HCT116 (cell line): ENCODE measurements at regions of chr7 and their contacts with region 1.

Region 1: GRCh38 chr7:31134246-31135188 is 82.4 kb downstream of the ADCYAP1R1 start:
- DNase-seq: peak; percentile 59
- ATAC-seq: peak; percentile 100
- H3K4me3 ChIP-seq: no peak overlapping the region
- H3K27ac ChIP-seq: no peak overlapping the region
- H3K4me1 ChIP-seq: no peaks in the 10 kb centered on the region
- H3K27me3 ChIP-seq: no peaks in the 10 kb centered on the region
- CTCF ChIP-seq: peak; percentile 62 to 82 (median 67)
- POLR2A ChIP-seq: no peak
- RAD21 ChIP-seq: peak; percentile 78

Region 2: DNA sequence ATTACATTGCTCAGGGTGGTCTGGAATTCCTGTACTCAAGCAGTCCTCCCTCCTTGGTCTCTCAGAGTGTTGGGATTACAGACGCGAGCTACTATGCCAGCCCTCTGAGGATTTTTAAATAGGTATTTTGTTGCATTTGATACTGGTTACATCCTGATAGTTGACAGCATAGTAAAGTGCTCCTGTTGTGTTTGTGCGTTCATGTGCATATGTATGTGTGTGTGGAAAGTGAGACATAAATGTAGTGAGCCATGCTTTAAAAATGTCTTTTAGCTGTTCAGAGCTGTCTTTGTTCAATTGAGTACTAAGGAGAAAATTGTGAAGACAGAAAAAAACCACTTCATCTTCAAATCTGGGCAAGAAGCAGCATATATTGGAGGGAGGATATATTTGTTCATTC is 822.3 kb before region 1 on chr7:
- CTCF ChIA-PET with region 1: no interaction called
- POLR2A ChIA-PET with region 1: no interaction called
- RAD21 ChIA-PET with region 1: no interaction called
- intact Hi-C with region 1: no loop called
- DNase-seq: no peak
- ATAC-seq: no peak
- H3K4me3 ChIP-seq: no peak overlapping the region
- H3K27ac ChIP-seq: no peak overlapping the region
- H3K4me1 ChIP-seq: peaks cover 0 to 6% of the 10 kb centered on the region in 2 experiments; a peak in 2 of 4 replicates
- H3K27me3 ChIP-seq: no peaks in the 10 kb centered on the region
- CTCF ChIP-seq: no peak
- POLR2A ChIP-seq: no peak
- RAD21 ChIP-seq: no peak

Region 3: GRCh38 chr7:30845426-30846135 is 288.9 kb before region 1 on chr7:
- CTCF ChIA-PET with region 1: no interaction called
- POLR2A ChIA-PET with region 1: no interaction called
- RAD21 ChIA-PET with region 1: no interaction called
- intact Hi-C with region 1: no loop called
- DNase-seq: no peak
- ATAC-seq: no peak
- H3K4me3 ChIP-seq: no peak overlapping the region
- H3K27ac ChIP-seq: peak overlapping the region; percentile 32; the same call in 1 of the 2 replicates
- H3K4me1 ChIP-seq: peaks cover 18 to 20% of the 10 kb centered on the region in 2 experiments
- H3K27me3 ChIP-seq: no peaks in the 10 kb centered on the region
- CTCF ChIP-seq: no peak
- POLR2A ChIP-seq: no peak
- RAD21 ChIP-seq: no peak

Region 4: GRCh38 chr7:30983042-30983913 is 151.2 kb before region 1 on chr7:
- CTCF ChIA-PET with region 1: interaction called, 482 read pairs
- POLR2A ChIA-PET with region 1: no interaction called
- RAD21 ChIA-PET with region 1: interaction called in 1 of 2 experiments, 4 read pairs
- intact Hi-C with region 1: no loop called
- DNase-seq: peak; percentile 70
- ATAC-seq: peak; percentile 98
- H3K4me3 ChIP-seq: no peak overlapping the region
- H3K27ac ChIP-seq: no peak overlapping the region
- H3K4me1 ChIP-seq: peaks cover 7 to 10% of the 10 kb centered on the region in 2 experiments; a peak in 3 of 4 replicates
- H3K27me3 ChIP-seq: peaks cover 14% of the 10 kb centered on the region
- CTCF ChIP-seq: peak; percentile 82 to 95 (median 90)
- POLR2A ChIP-seq: no peak
- RAD21 ChIP-seq: peak; percentile 94

Region 5: GRCh38 chr7:31151849-31152248 is 17.3 kb after region 1 on chr7:
- CTCF ChIA-PET with region 1: no interaction called
- POLR2A ChIA-PET with region 1: no interaction called
- RAD21 ChIA-PET with region 1: no interaction called
- intact Hi-C with region 1: no loop called
- DNase-seq: no peak
- ATAC-seq: no peak
- H3K4me3 ChIP-seq: no peak overlapping the region
- H3K27ac ChIP-seq: no peak overlapping the region
- H3K4me1 ChIP-seq: no peaks in the 10 kb centered on the region
- H3K27me3 ChIP-seq: peaks cover 3% of the 10 kb centered on the region; the same call in 1 of the 2 replicates
- CTCF ChIP-seq: no peak
- POLR2A ChIP-seq: no peak
- RAD21 ChIP-seq: no peak

Region 6: DNA sequence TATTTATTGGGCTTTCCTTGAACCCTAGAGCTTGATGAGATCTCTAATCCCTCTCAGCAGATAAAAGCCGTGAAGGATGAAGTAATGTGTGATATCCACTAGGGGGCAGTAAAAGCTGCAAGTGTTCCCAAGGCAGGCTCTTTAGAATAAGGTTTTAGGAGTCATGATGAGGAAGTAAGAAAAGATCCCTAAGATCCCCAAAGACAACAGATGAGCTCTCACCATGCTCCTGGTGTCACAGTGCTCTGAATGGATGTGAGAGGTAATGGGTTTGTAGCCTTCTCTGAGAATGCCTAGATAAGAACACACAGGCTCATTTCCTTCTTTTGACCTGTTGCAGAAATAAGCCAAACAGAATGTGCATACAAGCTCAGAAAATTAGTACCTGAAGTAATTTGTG is 308.9 kb after region 1 on chr7:
- CTCF ChIA-PET with region 1: interaction called, 12 read pairs
- POLR2A ChIA-PET with region 1: no interaction called
- RAD21 ChIA-PET with region 1: no interaction called
- intact Hi-C with region 1: no loop called
- DNase-seq: peak; percentile 32
- ATAC-seq: peak; percentile 87
- H3K4me3 ChIP-seq: no peak overlapping the region
- H3K27ac ChIP-seq: no peak overlapping the region
- H3K4me1 ChIP-seq: no peaks in the 10 kb centered on the region
- H3K27me3 ChIP-seq: peaks cover 28% of the 10 kb centered on the region; the same call in 1 of the 2 replicates
- CTCF ChIP-seq: peak; percentile 70 to 84 (median 71)
- POLR2A ChIP-seq: no peak
- RAD21 ChIP-seq: peak; percentile 76

Region 7: DNA sequence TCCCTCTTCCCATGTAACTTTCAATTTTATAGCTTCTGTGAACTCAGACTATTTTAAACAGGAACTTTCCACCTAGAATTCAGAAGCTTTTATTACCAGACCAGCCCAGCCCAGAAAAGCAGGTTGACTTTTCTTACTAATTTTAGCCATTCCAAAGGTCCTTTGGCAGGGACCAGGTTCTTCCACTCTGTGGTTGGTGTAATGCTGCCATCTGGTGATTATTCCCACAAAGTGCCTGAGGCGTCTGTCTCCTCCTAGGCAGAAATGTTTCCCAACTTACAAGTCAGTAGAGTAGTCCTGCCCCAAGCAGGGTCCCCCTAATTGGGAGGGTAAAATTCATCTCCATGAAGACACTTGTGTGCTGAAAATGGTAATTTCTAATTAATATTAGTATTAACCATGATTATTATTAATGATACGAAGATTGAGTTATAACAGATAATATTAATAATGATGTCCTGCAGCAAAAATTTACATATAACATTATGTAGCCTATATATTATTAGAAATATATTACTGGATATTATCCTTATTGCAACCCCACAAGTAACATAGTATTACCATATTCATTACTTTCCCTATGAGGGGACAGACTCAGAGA is 499.5 kb after region 1 on chr7:
- CTCF ChIA-PET with region 1: interaction called, 25 read pairs
- POLR2A ChIA-PET with region 1: no interaction called
- RAD21 ChIA-PET with region 1: no interaction called
- intact Hi-C with region 1: loop called (anchors 1 kb)
- DNase-seq: peak; percentile 34
- ATAC-seq: peak; percentile 83
- H3K4me3 ChIP-seq: no peak overlapping the region
- H3K27ac ChIP-seq: no peak overlapping the region
- H3K4me1 ChIP-seq: no peaks in the 10 kb centered on the region
- H3K27me3 ChIP-seq: no peaks in the 10 kb centered on the region
- CTCF ChIP-seq: peak; percentile 58 to 62 (median 62)
- POLR2A ChIP-seq: no peak
- RAD21 ChIP-seq: peak; percentile 81

Region 8: DNA sequence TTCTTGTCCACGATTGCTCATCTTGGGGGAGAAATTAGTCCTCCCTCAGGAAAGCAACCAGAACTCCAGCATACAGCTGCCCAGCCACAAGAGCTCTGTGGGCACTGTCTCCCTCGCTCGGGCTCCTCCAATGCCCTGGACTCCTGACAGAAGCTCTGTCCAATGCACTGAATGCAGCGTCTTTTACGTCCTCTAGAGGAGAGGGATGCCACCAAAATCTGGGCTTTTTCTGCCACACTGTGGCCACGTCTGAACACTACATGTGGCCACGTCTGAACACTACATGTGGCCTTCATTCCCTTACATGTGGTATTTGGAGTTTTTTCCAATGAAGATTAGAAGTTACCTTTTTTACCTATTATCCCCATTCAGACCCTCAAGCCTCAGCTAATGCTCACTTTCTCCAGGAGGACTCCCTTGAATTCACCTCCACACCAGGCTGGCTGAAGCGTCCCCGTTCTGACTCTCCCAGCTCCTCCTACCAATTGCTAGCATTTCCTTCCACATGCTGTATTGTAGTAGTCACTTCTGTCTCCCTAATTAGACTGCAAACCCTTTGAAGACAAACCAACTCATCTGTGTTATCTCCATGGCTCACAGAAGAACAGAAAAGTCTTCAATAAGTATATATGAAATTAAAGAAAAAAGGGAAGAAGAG is 1070.0 kb after region 1 on chr7:
- CTCF ChIA-PET with region 1: no interaction called
- POLR2A ChIA-PET with region 1: no interaction called
- RAD21 ChIA-PET with region 1: no interaction called
- intact Hi-C with region 1: loop called (anchors 5 kb)
- DNase-seq: peak; percentile 65
- ATAC-seq: peak; percentile 94
- H3K4me3 ChIP-seq: no peak overlapping the region
- H3K27ac ChIP-seq: no peak overlapping the region
- H3K4me1 ChIP-seq: no peaks in the 10 kb centered on the region
- H3K27me3 ChIP-seq: peaks cover 20% of the 10 kb centered on the region; the same call in 1 of the 2 replicates
- CTCF ChIP-seq: peak; percentile 66 to 70 (median 69); a peak in 5 of 6 replicates
- POLR2A ChIP-seq: no peak
- RAD21 ChIP-seq: peak; percentile 78